Dorsolateral prefrontal cortex (tissue), 120 donors: ENCODE measurements at regions of chr2 and their contacts with region 1.

Region 1: GRCh38 chr2:232327105-232328041 is 51.2 kb upstream of the ALPP start:
- DNase-seq: peak; percentile 30 to 86 (median 78)
- H3K4me3 ChIP-seq: no peak overlapping the region
- H3K27ac ChIP-seq: no peak overlapping the region
- H3K27me3 ChIP-seq: no peaks in the 10 kb centered on the region
- CTCF ChIP-seq: peak; percentile 47 to 95 (median 85)

Region 2: GRCh38 chr2:231996797-231997540 is 330.4 kb before region 1 on chr2:
- intact Hi-C with region 1: no loop called
- DNase-seq: no peak
- H3K4me3 ChIP-seq: no peak overlapping the region
- H3K27ac ChIP-seq: no peak overlapping the region
- H3K27me3 ChIP-seq: no peaks in the 10 kb centered on the region
- CTCF ChIP-seq: no peak

Region 3: DNA sequence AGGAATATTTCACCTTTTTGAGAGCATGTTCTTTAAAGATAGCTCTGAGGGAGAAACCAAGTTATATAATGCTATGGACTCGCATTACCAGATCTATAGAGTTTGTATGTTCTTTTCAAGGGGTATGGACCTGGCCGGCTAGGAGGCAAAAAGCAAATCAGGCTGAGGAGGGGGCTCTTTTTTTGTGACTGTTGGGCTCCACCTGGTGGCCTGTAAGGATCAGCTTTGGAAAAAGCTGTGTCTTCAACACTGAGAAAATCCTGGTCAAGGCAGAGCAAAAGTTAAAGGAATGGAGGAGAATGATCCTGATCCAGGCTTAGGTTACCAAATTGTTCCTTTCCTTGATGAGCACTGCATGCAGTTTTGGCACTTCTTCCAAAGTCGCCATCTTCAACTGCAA is 185.3 kb before region 1 on chr2:
- intact Hi-C with region 1: loop called (anchors 5 to 10 kb)
- DNase-seq: peak in 5 of 10 donors; percentile 14 to 59 (median 39)
- H3K4me3 ChIP-seq: no peak overlapping the region
- H3K27ac ChIP-seq: no peak overlapping the region
- H3K27me3 ChIP-seq: no peaks in the 10 kb centered on the region
- CTCF ChIP-seq: peak in 55 of 56 donors; percentile 53 to 92 (median 74)

Region 4: DNA sequence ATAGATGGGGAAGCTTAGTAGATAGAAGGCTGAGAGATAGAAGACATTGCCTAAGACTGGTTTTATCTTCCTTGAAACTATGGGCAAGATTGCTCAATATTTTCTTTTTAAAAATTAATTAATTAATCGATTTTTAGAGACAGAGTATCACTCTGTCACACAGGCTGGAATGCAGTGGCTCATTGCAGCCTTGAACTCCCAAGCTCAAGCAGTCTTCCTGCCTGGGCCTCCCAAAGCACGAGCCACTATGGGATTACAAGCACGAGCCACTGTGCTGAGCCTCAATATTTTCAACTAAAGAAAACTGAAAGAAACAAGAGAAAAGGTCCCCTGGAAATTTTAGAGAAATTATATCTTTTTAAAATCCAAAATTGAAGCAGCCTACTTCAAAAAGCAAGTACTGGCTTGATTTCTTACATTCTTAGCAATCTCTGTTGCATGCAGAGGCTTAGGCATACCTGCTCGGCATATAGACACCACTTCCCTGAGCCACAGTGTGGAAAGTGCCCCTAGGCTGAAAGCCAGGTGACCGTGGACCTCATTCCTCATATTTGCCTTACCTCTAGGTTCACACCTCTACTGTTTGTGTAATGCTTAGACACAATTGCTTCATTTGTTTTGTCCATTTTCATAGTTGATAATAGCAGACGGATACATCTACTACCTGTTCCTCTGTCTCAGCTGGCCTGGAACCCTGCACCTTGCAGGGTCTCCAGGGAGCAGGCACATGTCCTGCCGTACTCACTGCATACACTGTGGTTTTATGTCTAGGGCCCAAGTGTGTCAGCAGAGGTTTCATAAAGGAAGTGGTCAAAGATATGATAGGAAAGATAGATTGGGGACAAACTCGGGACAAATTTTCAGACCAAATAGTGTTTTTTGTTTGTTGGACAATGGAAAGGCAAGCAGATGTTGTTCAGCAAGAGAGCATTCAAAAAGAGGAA is 115.4 kb before region 1 on chr2:
- intact Hi-C with region 1: no loop called
- DNase-seq: no peak
- H3K4me3 ChIP-seq: no peak overlapping the region
- H3K27ac ChIP-seq: no peak overlapping the region
- H3K27me3 ChIP-seq: no peaks in the 10 kb centered on the region
- CTCF ChIP-seq: no peak

Region 5: DNA sequence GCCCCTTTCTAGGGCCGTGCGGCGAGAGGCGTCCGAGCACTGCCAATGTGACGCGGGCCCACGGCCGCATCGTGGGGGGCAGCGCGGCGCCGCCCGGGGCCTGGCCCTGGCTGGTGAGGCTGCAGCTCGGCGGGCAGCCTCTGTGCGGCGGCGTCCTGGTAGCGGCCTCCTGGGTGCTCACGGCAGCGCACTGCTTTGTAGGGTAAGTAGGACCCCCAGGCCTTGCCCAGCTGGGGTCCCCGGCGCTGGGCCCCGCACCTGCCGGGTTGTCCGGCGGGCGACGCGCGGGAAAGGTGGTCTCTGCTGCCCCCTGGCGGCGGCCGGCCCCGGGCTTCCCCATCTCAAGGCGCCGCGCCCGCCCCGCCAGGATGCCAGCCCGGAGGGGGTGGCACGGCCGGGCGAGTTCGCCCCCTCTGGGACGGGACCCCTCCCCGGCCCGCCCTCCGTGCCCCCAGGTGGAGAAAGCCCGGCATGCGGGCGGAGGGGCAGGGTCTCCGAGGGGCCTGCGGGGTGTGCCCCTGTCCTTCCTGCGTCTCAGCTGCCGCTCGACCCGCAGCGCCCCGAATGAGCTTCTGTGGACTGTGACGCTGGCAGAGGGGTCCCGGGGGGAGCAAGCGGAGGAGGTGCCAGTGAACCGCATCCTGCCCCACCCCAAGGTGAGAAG is 194.7 kb after region 1 on chr2:
- intact Hi-C with region 1: loop called (anchors 5 to 10 kb)
- DNase-seq: peak in 7 of 10 donors; percentile 32 to 77 (median 59)
- H3K4me3 ChIP-seq: peak overlapping the region; percentile 5 to 66 (median 47)
- H3K27ac ChIP-seq: peak overlapping the region in 1 of 59 donors; percentile 48
- H3K27me3 ChIP-seq: peaks cover 0 to 57% (median 29%) of the 10 kb centered on the region in 45 donors
- CTCF ChIP-seq: peak; percentile 72 to 99 (median 94)